ENCODE measurements at regions of chr7 and their contacts with region 1.

Region 1: GRCh38 chr7:13262929-13263530 is 575.6 kb downstream of the ARL4A start:
- DNase-seq: no peak
- H3K4me3 ChIP-seq: no peak overlapping the region
- H3K27ac ChIP-seq: no peak overlapping the region
- H3K4me1 ChIP-seq: no peaks in the 10 kb centered on the region
- H3K27me3 ChIP-seq: peaks cover 0 to 4% (median 0%) of the 10 kb centered on the region in 7 donors
- CTCF ChIP-seq: peak in 9 of 11 experiments; percentile 12 to 58 (median 33)
- POLR2A ChIP-seq: no peak

Region 2: GRCh38 chr7:12524794-12525386 is 738.1 kb before region 1 on chr7:
- intact Hi-C with region 1: loop called (anchors 5 kb)
- DNase-seq: no peak
- H3K4me3 ChIP-seq: no peak overlapping the region
- H3K27ac ChIP-seq: no peak overlapping the region
- H3K4me1 ChIP-seq: no peaks in the 10 kb centered on the region
- H3K27me3 ChIP-seq: peaks cover 0 to 13% (median 0%) of the 10 kb centered on the region in 7 donors
- CTCF ChIP-seq: peak in 10 of 11 experiments; percentile 37 to 80 (median 60)
- POLR2A ChIP-seq: no peak

Region 3: GRCh38 chr7:12637819-12638592 is 625.0 kb before region 1 on chr7:
- intact Hi-C with region 1: loop called (anchors 2 kb)
- DNase-seq: no peak
- H3K4me3 ChIP-seq: peak overlapping the region in 1 of 8 donors; percentile 15
- H3K27ac ChIP-seq: peak overlapping the region in 5 of 8 donors; percentile 3 to 65 (median 40)
- H3K4me1 ChIP-seq: peaks cover 8 to 24% (median 16%) of the 10 kb centered on the region in 6 donors
- H3K27me3 ChIP-seq: no peaks in the 10 kb centered on the region
- CTCF ChIP-seq: no peak
- POLR2A ChIP-seq: no peak

Measured in spleen (tissue), 13 donors.